ENCODE measurements at regions of chr14 and their contacts with region 1.

Region 1: DNA sequence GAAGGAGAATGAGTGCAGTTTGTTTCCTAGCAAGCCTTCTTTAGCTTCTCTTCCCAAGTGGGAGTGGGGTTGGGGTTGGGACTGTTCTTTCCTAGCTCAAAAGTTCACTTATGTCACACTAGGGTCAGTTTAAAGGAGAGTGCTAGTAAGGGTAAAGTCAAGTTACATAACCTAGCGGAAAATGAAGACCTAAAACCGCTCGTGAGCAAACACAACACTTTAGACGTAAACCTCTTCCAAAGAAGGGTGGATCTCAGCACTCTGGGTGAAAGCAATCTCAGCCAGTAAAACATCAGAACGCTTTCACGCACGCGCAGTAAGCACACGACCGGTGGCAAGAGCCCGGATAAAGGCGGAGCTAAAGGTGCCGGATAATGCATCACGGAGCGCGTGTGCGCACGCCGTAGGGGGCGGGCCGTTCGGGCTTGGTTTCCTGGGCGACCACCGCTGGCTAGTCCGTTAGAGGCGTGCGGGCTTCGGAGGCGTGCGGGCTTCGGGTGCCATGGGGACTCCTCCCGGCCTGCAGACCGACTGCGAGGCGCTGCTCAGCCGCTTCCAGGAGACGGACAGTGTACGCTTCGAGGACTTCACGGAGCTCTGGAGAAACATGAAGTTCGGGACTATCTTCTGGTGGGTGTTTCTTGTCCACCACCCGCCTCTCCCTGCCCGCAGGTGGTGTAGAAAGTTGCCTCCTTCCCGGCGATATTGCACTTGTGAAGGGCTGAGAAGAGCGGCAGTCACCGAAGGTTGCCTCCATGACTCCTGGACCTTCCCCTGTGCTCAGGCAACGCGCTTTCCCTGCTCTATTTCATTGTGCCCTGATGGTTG is at the start of gene SNAPC1:
- DNase-seq: peak; percentile 98
- H3K4me3 Mint-ChIP-seq: peak within 1 kb of the TSS; percentile 94
- H3K27ac Mint-ChIP-seq: peak within 1 kb of the TSS; percentile 93
- H3K4me1 Mint-ChIP-seq: peaks cover 36% of the 10 kb centered on the region
- H3K27me3 Mint-ChIP-seq: peaks cover 3% of the 10 kb centered on the region
- total RNA-seq, gene SNAPC1: 10.2 and 10.5 TPM in 2 replicates

Region 2: GRCh38 chr14:61321385-61322010 is 440.7 kb before region 1 on chr14 and contains the start of gene PRKCH:
- intact Hi-C with region 1: loop called (anchors 10 kb)
- DNase-seq: peak; percentile 81
- H3K4me3 Mint-ChIP-seq: peak within 1 kb of the TSS; percentile 98
- H3K27ac Mint-ChIP-seq: peak within 1 kb of the TSS; percentile 94
- H3K4me1 Mint-ChIP-seq: peaks cover 29% of the 10 kb centered on the region
- H3K27me3 Mint-ChIP-seq: no peaks in the 10 kb centered on the region
- total RNA-seq, gene PRKCH: 101 and 102 TPM in 2 replicates